ENCODE measurements at regions of chr19 and their contacts with region 1.

Region 1: GRCh38 chr19:33771384-33772101 is 25.1 kb upstream of the KCTD15 start:
- DNase-seq: peak; percentile 75
- H3K4me3 Mint-ChIP-seq: no peak overlapping the region
- H3K27ac Mint-ChIP-seq: no peak overlapping the region
- H3K4me1 Mint-ChIP-seq: no peaks in the 10 kb centered on the region
- H3K27me3 Mint-ChIP-seq: peaks cover 21% of the 10 kb centered on the region
- CTCF ChIP-seq: peak; percentile 83

Region 2: DNA sequence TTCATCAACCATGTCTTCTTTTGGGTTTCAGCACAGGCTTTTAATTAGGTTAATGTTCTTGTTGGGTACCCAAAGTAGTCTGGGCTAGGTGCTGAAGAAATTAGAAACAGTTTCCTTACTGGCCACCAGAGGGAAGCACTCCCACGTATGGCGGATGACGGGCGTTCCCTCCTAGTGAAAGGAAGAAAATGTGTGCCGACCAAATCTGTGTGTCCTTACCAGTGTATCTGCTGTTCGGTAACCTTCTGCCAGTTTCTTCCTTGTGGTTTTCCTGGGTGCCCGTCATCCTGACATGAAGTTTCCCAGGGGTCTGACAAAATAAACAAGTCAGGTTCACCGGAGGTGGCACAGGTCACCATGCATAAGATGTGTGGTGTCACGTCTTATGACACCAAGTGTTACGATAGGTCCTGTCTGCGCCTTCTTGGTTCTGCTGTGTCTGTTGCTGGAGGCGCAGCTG is 645.6 kb before region 1 on chr19:
- CTCF ChIA-PET with region 1: interaction called, 12 read pairs
- POLR2A ChIA-PET with region 1: no interaction called
- intact Hi-C with region 1: no loop called
- DNase-seq: peak; percentile 71
- H3K4me3 Mint-ChIP-seq: no peak overlapping the region
- H3K27ac Mint-ChIP-seq: no peak overlapping the region
- H3K4me1 Mint-ChIP-seq: no peaks in the 10 kb centered on the region
- H3K27me3 Mint-ChIP-seq: no peaks in the 10 kb centered on the region
- CTCF ChIP-seq: peak; percentile 72

Region 3: GRCh38 chr19:33241530-33242101 is 529.9 kb before region 1 on chr19:
- CTCF ChIA-PET with region 1: interaction called, 10 read pairs
- POLR2A ChIA-PET with region 1: no interaction called
- intact Hi-C with region 1: no loop called
- DNase-seq: peak; percentile 29
- H3K4me3 Mint-ChIP-seq: no peak overlapping the region
- H3K27ac Mint-ChIP-seq: no peak overlapping the region
- H3K4me1 Mint-ChIP-seq: no peaks in the 10 kb centered on the region
- H3K27me3 Mint-ChIP-seq: peaks cover 9% of the 10 kb centered on the region
- CTCF ChIP-seq: peak; percentile 84

Region 4: DNA sequence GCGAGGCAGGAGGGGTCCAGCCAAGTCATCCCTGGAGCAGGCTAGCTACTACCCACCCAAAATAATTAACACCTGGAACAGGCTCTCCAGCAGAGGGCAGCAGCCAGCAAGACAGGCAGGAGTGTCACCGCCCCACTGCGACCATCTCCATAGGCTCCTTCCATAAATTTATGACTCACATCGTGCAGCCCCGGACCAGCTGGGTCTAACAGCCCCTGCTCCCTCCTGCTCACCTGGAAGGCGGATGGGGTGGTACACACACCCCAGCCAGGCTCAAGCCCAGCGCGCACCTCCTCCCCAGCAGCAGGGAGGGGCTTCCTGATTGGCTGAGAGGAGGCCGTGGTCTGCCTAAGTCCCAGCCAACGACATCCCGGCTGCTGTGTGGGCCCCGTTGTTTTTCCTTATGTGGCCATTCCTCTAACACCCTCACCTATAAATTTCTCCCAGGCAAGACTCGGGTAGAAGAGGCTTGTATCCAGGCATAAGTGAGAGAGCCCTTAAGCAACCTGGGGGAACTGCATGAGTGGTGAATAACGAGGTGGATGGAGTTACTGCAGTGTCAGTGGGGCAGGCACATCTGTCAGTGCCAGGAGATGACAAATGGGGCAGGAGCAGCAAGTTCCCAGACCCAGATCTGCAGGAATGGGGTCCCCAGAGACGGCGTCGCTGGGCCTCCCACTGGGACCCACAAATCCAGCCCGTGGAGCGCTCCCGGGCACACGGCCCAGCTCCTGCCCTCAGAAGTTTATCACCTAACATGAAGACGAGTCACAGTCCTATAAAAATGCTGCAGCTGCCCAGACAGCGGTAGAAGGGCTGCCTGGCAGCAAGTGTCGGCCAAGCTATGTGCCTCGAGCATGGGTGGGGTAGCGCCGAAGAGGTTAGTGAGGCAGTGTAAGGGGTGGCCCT is 355.0 kb before region 1 on chr19:
- CTCF ChIA-PET with region 1: interaction called, 96 read pairs
- POLR2A ChIA-PET with region 1: no interaction called
- intact Hi-C with region 1: loop called (anchors 5 kb)
- DNase-seq: peak; percentile 74
- H3K4me3 Mint-ChIP-seq: no peak overlapping the region
- H3K27ac Mint-ChIP-seq: no peak overlapping the region
- H3K4me1 Mint-ChIP-seq: no peaks in the 10 kb centered on the region
- H3K27me3 Mint-ChIP-seq: no peaks in the 10 kb centered on the region
- CTCF ChIP-seq: peak; percentile 70

Region 5: GRCh38 chr19:33749619-33750175 is 21.8 kb before region 1 on chr19:
- CTCF ChIA-PET with region 1: interaction called, 13 read pairs
- POLR2A ChIA-PET with region 1: no interaction called
- intact Hi-C with region 1: no loop called
- DNase-seq: no peak
- H3K4me3 Mint-ChIP-seq: no peak overlapping the region
- H3K27ac Mint-ChIP-seq: no peak overlapping the region
- H3K4me1 Mint-ChIP-seq: no peaks in the 10 kb centered on the region
- H3K27me3 Mint-ChIP-seq: peaks cover 12% of the 10 kb centered on the region
- CTCF ChIP-seq: no peak

Region 6: GRCh38 chr19:33785795-33786194 is 14.3 kb after region 1 on chr19:
- CTCF ChIA-PET with region 1: interaction called, 62 read pairs
- POLR2A ChIA-PET with region 1: no interaction called
- intact Hi-C with region 1: no loop called
- DNase-seq: peak; percentile 38
- H3K4me3 Mint-ChIP-seq: no peak overlapping the region
- H3K27ac Mint-ChIP-seq: no peak overlapping the region
- H3K4me1 Mint-ChIP-seq: no peaks in the 10 kb centered on the region
- H3K27me3 Mint-ChIP-seq: peaks cover 11% of the 10 kb centered on the region
- CTCF ChIP-seq: no peak

Region 7: GRCh38 chr19:34096020-34096915 is 324.7 kb after region 1 on chr19:
- CTCF ChIA-PET with region 1: interaction called, 129 read pairs
- POLR2A ChIA-PET with region 1: no interaction called
- intact Hi-C with region 1: no loop called
- DNase-seq: peak; percentile 69
- H3K4me3 Mint-ChIP-seq: no peak overlapping the region
- H3K27ac Mint-ChIP-seq: no peak overlapping the region
- H3K4me1 Mint-ChIP-seq: no peaks in the 10 kb centered on the region
- H3K27me3 Mint-ChIP-seq: peaks cover 28% of the 10 kb centered on the region
- CTCF ChIP-seq: peak; percentile 65